Activated T-helper 1 cell treated with anti-CD3 and anti-CD28 coated beads, Interleukin-12 subunit alpha, Interleukin-12 subunit beta, Interleukin-2, Interleukin-4 antibody, amounts not matched to agents 30 ng/mL and 10 ng/mL and 1 ng/mL, durations not matched to agents 14 hours and 24 hours and 36 hours (primary cell): ENCODE measurements at regions of chr5 and their contacts with region 1.

Region 1: GRCh38 chr5:160467555-160468362 is 46.1 kb downstream of the PTTG1 start:
- DNase-seq: peak; percentile 85
- H3K4me3 Mint-ChIP-seq: peak overlapping the region; percentile 100
- H3K27ac Mint-ChIP-seq: peak overlapping the region; percentile 100
- H3K4me1 Mint-ChIP-seq: peaks cover 68% of the 10 kb centered on the region
- H3K27me3 Mint-ChIP-seq: no peaks in the 10 kb centered on the region

Region 2: GRCh38 chr5:160418561-160419457 is 49.0 kb before region 1 on chr5 and contains the start of gene SLU7:
- intact Hi-C with region 1: loop called (anchors 1 kb)
- DNase-seq: peak; percentile 91
- H3K4me3 Mint-ChIP-seq: peak within 1 kb of the TSS; percentile 94
- H3K27ac Mint-ChIP-seq: peak within 1 kb of the TSS; percentile 95
- H3K4me1 Mint-ChIP-seq: peaks cover 77% of the 10 kb centered on the region
- H3K27me3 Mint-ChIP-seq: no peaks in the 10 kb centered on the region
- total RNA-seq, gene SLU7: 37.4 and 47.4 TPM in 2 replicates

Region 3: DNA sequence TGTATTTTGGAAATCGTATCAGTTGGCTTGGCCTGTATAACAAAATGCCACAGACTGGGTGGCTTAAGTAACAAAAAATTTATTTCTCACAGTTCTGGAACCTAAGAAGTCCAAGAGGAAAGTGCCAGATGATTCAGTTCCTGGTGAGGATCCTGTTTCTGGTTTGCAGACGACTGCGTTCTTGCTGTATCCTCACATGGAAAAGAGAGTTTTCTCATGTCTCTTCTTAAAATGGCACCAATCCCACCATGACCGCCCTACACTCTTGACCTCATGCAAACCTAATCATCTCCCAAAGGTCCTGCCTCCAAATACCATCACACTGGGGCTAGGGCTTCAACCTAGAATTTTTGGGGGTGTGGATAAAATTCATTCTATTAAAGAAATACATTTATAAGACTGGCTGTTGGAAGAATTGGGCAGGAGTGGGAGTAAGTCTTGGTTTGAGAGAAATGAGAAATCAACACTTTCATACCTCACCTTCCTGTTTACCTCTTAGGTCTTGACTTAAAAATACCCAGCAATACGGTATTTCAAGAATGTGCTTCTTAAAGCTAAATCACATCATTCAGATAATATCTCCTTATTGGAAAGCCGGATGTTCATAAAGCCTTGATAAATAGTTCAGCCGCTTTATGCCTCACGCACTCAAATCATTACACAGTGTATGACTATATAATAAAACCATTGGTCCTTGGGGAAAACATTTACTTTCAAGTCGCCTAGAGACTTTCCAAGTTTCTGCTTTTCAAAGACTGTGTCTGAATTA is 17.4 kb before region 1 on chr5:
- intact Hi-C with region 1: loop called (anchors 1 kb)
- DNase-seq: no peak
- H3K4me3 Mint-ChIP-seq: no peak overlapping the region
- H3K27ac Mint-ChIP-seq: peak overlapping the region; percentile 10
- H3K4me1 Mint-ChIP-seq: peaks cover 64% of the 10 kb centered on the region
- H3K27me3 Mint-ChIP-seq: no peaks in the 10 kb centered on the region

Region 4: DNA sequence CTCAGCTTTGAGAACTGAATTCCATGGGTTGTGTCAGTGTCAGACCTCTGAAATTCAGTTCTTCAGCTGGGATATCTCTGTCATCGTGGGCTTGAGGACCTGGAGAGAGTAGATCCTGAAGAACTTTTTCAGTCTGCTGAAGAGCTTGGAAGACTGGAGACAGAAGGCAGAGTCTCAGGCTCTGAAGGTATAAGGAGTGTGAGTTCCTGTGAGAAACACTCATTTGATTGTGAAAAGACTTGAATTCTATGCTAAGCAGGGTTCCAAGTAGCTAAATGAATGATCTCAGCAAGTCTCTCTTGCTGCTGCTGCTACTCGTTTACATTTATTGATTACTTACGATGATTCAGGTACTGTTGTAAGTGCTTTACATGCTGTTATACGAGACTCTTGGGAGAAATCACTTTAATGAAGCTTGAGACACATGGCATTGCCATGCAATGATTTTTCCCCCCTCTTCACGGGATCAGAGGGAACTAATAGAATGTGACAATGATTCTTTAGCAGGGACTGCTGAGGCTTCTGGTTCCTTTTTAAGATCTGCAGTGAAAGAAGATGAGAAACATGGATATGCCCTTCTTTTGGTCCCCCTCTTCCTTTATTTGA is 17.7 kb after region 1 on chr5:
- intact Hi-C with region 1: loop called (anchors 2 kb)
- DNase-seq: no peak
- H3K4me3 Mint-ChIP-seq: no peak overlapping the region
- H3K27ac Mint-ChIP-seq: peak overlapping the region; percentile 16
- H3K4me1 Mint-ChIP-seq: peaks cover 63% of the 10 kb centered on the region
- H3K27me3 Mint-ChIP-seq: no peaks in the 10 kb centered on the region

Region 5: DNA sequence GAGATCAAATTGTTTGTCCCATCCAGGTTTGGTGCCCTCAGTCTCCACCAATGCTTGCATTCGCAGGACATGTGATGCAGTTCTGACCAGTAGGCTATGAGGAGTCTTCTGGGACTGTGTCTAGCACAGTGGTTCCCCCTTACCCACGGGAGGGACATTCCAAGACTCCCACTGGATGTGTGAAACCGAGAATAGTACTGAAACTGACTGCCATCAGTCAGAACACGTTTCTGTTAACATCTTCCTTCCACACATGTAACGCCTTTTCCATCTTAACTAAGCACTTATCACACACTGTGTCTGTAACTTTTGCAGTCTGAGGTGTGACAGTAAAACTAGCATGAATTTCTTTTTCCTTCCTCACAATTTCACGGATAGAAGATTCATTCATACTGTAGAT is 28.6 kb after region 1 on chr5:
- intact Hi-C with region 1: loop called (anchors 1 kb)
- DNase-seq: no peak
- H3K4me3 Mint-ChIP-seq: no peak overlapping the region
- H3K27ac Mint-ChIP-seq: peak overlapping the region; percentile 69
- H3K4me1 Mint-ChIP-seq: peaks cover 29% of the 10 kb centered on the region
- H3K27me3 Mint-ChIP-seq: no peaks in the 10 kb centered on the region

Region 6: DNA sequence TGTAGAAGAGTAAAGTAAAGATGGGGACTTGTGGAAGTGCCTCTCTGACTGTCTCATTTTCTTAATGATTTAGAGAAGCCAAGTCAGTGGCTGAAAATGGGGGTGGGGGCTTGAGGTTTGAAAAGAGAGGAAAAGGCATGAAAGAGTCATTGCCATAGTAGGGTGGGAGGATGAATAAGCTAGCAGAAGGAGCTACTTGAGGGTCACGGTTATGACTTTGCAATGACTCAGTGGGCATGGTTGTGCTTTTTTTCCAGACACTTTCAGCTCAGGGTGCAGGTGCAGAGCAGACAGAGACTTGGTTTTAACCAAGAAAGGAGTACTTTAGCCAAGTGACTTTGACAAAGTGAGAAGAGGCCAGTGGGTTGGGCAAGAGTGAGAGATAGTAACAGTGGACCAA is 71.7 kb after region 1 on chr5:
- intact Hi-C with region 1: loop called (anchors 1 kb)
- DNase-seq: no peak
- H3K4me3 Mint-ChIP-seq: no peak overlapping the region
- H3K27ac Mint-ChIP-seq: no peak overlapping the region
- H3K4me1 Mint-ChIP-seq: peaks cover 19% of the 10 kb centered on the region
- H3K27me3 Mint-ChIP-seq: no peaks in the 10 kb centered on the region

Region 7: DNA sequence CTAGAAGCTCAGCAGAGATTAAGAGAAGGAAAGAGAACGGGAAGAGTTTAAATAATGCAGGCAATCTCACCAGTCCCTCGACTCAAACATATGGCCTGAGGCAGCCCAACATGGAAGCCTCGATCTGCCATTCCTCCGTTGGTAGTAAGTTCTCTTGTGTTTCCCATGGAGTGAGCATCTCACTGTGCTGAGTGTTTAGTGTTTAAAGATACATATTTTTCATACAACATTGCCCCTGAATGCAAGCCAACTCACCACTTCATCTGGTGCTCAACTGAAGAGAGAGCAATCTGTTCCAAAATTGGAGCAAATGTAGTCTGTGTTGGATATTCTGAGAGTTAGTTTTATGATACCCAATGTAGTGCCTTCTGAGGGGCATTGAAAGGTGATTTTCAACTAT is 555.8 kb after region 1 on chr5:
- intact Hi-C with region 1: no loop called
- DNase-seq: no peak
- H3K4me3 Mint-ChIP-seq: no peak overlapping the region
- H3K27ac Mint-ChIP-seq: no peak overlapping the region
- H3K4me1 Mint-ChIP-seq: no peaks in the 10 kb centered on the region
- H3K27me3 Mint-ChIP-seq: no peaks in the 10 kb centered on the region